B cell (primary cell): ENCODE measurements at regions of chr4 and their contacts with region 1.

Region 1: DNA sequence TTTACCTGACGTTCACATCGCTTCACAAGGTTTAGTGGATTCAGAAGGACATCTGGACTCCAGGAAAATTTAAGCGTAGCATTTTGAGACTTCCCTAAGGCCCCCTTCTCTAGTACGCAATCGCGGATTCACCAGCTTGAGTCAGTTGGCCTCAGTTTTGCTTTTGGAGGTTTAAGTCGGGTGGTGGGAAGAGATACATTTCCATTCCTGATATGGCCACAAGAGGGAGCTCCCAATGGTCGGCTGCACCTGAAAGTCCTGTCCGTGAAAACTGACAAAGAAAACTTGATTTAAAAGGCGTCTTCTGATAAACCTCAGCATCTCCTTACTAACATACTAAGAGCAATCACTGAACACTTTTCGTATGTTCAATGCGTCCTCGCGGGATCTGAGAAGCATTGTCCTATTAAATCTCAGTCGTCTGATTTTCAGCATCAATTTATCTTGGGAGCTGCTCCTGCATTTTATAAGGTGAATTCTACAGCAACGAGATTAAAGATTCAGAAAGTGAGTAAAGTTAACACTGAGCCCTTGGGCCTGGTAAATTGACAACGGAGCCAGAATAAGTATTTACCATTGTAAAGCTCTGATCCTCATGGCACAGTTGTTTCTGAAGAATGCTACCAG is 50.6 kb downstream of the LGI2 start:
- DNase-seq: peak; percentile 68
- ATAC-seq: no peak
- H3K4me3 ChIP-seq: peak overlapping the region in 2 of 5 experiments; percentile 33 to 36
- H3K4me3 Mint-ChIP-seq: peak overlapping the region; percentile 73
- H3K27ac ChIP-seq: no peak overlapping the region
- H3K27ac Mint-ChIP-seq: no peak overlapping the region
- H3K4me1 ChIP-seq: peaks cover 5 to 7% of the 10 kb centered on the region in 2 donors
- H3K4me1 Mint-ChIP-seq: peaks cover 9% of the 10 kb centered on the region
- H3K27me3 ChIP-seq: peaks cover 0 to 20% (median 5%) of the 10 kb centered on the region in 4 experiments
- H3K27me3 Mint-ChIP-seq: peaks cover 33% of the 10 kb centered on the region
- CTCF ChIP-seq: peak; percentile 88

Region 2: GRCh38 chr4:23305026-23305425 is 1675.2 kb before region 1 on chr4:
- CTCF ChIA-PET with region 1: no interaction called
- POLR2A ChIA-PET with region 1: no interaction called
- intact Hi-C with region 1: no loop called
- DNase-seq: no peak
- ATAC-seq: no peak
- H3K4me3 ChIP-seq: no peak overlapping the region
- H3K4me3 Mint-ChIP-seq: no peak overlapping the region
- H3K27ac ChIP-seq: no peak overlapping the region
- H3K27ac Mint-ChIP-seq: no peak overlapping the region
- H3K4me1 ChIP-seq: no peaks in the 10 kb centered on the region
- H3K4me1 Mint-ChIP-seq: no peaks in the 10 kb centered on the region
- H3K27me3 ChIP-seq: no peaks in the 10 kb centered on the region
- H3K27me3 Mint-ChIP-seq: no peaks in the 10 kb centered on the region
- CTCF ChIP-seq: no peak

Region 3: GRCh38 chr4:24991015-24991414 is 10.8 kb after region 1 on chr4:
- CTCF ChIA-PET with region 1: interaction called, 12 read pairs
- POLR2A ChIA-PET with region 1: no interaction called
- intact Hi-C with region 1: no loop called
- DNase-seq: no peak
- ATAC-seq: no peak
- H3K4me3 ChIP-seq: no peak overlapping the region
- H3K4me3 Mint-ChIP-seq: no peak overlapping the region
- H3K27ac ChIP-seq: no peak overlapping the region
- H3K27ac Mint-ChIP-seq: no peak overlapping the region
- H3K4me1 ChIP-seq: no peaks in the 10 kb centered on the region
- H3K4me1 Mint-ChIP-seq: no peaks in the 10 kb centered on the region
- H3K27me3 ChIP-seq: no peaks in the 10 kb centered on the region
- H3K27me3 Mint-ChIP-seq: no peaks in the 10 kb centered on the region
- CTCF ChIP-seq: no peak

Region 4: GRCh38 chr4:25129917-25130316 is 149.7 kb after region 1 on chr4:
- CTCF ChIA-PET with region 1: no interaction called
- POLR2A ChIA-PET with region 1: no interaction called
- intact Hi-C with region 1: loop called (anchors 10 kb)
- DNase-seq: no peak
- ATAC-seq: no peak
- H3K4me3 ChIP-seq: no peak overlapping the region
- H3K4me3 Mint-ChIP-seq: no peak overlapping the region
- H3K27ac ChIP-seq: no peak overlapping the region
- H3K27ac Mint-ChIP-seq: no peak overlapping the region
- H3K4me1 ChIP-seq: no peaks in the 10 kb centered on the region
- H3K4me1 Mint-ChIP-seq: no peaks in the 10 kb centered on the region
- H3K27me3 ChIP-seq: no peaks in the 10 kb centered on the region
- H3K27me3 Mint-ChIP-seq: no peaks in the 10 kb centered on the region
- CTCF ChIP-seq: no peak

Region 5: GRCh38 chr4:25367004-25367621 is 386.9 kb after region 1 on chr4:
- CTCF ChIA-PET with region 1: interaction called, 84 read pairs
- POLR2A ChIA-PET with region 1: no interaction called
- intact Hi-C with region 1: no loop called
- DNase-seq: peak; percentile 51
- ATAC-seq: no peak
- H3K4me3 ChIP-seq: no peak overlapping the region
- H3K4me3 Mint-ChIP-seq: no peak overlapping the region
- H3K27ac ChIP-seq: no peak overlapping the region
- H3K27ac Mint-ChIP-seq: no peak overlapping the region
- H3K4me1 ChIP-seq: no peaks in the 10 kb centered on the region
- H3K4me1 Mint-ChIP-seq: no peaks in the 10 kb centered on the region
- H3K27me3 ChIP-seq: no peaks in the 10 kb centered on the region
- H3K27me3 Mint-ChIP-seq: no peaks in the 10 kb centered on the region
- CTCF ChIP-seq: peak; percentile 78